B cell (primary cell): ENCODE measurements at regions of chr2 and their contacts with region 1.

Region 1: GRCh38 chr2:30146438-30147147 is at the start of gene YPEL5:
- DNase-seq: peak; percentile 100
- ATAC-seq: peak; percentile 81
- H3K4me3 ChIP-seq: peak within 1 kb of the TSS; percentile 87 to 98 (median 94)
- H3K4me3 Mint-ChIP-seq: peak within 1 kb of the TSS; percentile 90
- H3K27ac ChIP-seq: peak within 1 kb of the TSS; percentile 99
- H3K27ac Mint-ChIP-seq: peak within 1 kb of the TSS; percentile 100
- H3K4me1 ChIP-seq: peaks cover 38 to 46% of the 10 kb centered on the region in 2 donors
- H3K4me1 Mint-ChIP-seq: peaks cover 45% of the 10 kb centered on the region
- H3K27me3 ChIP-seq: no peaks in the 10 kb centered on the region
- H3K27me3 Mint-ChIP-seq: no peaks in the 10 kb centered on the region
- CTCF ChIP-seq: no peak
- total RNA-seq, gene YPEL5: 115 and 117 TPM in 2 replicates

Region 2: GRCh38 chr2:28870146-28870891 is 1276.3 kb before region 1 on chr2 and contains the start of gene TRMT61B:
- CTCF ChIA-PET with region 1: no interaction called
- POLR2A ChIA-PET with region 1: interaction called, 4 read pairs
- intact Hi-C with region 1: loop called (anchors 2 kb)
- DNase-seq: peak; percentile 98
- ATAC-seq: peak; percentile 96
- H3K4me3 ChIP-seq: peak within 1 kb of the TSS; percentile 71 to 92 (median 90)
- H3K4me3 Mint-ChIP-seq: peak within 1 kb of the TSS; percentile 99
- H3K27ac ChIP-seq: peak within 1 kb of the TSS; percentile 85 to 94
- H3K27ac Mint-ChIP-seq: peak within 1 kb of the TSS; percentile 100
- H3K4me1 ChIP-seq: peaks cover 20 to 23% of the 10 kb centered on the region in 2 donors
- H3K4me1 Mint-ChIP-seq: peaks cover 29% of the 10 kb centered on the region
- H3K27me3 ChIP-seq: peaks cover 0 to 6% (median 0%) of the 10 kb centered on the region in 4 experiments
- H3K27me3 Mint-ChIP-seq: peaks cover 2% of the 10 kb centered on the region
- CTCF ChIP-seq: no peak
- total RNA-seq, gene TRMT61B: 20.3 and 23.0 TPM in 2 replicates

Region 3: GRCh38 chr2:29733965-29734364 is 412.6 kb before region 1 on chr2:
- CTCF ChIA-PET with region 1: no interaction called
- POLR2A ChIA-PET with region 1: no interaction called
- intact Hi-C with region 1: no loop called
- DNase-seq: no peak
- ATAC-seq: no peak
- H3K4me3 ChIP-seq: no peak overlapping the region
- H3K4me3 Mint-ChIP-seq: no peak overlapping the region
- H3K27ac ChIP-seq: no peak overlapping the region
- H3K27ac Mint-ChIP-seq: no peak overlapping the region
- H3K4me1 ChIP-seq: no peaks in the 10 kb centered on the region
- H3K4me1 Mint-ChIP-seq: no peaks in the 10 kb centered on the region
- H3K27me3 ChIP-seq: no peaks in the 10 kb centered on the region
- H3K27me3 Mint-ChIP-seq: peaks cover 46% of the 10 kb centered on the region
- CTCF ChIP-seq: no peak

Region 4: DNA sequence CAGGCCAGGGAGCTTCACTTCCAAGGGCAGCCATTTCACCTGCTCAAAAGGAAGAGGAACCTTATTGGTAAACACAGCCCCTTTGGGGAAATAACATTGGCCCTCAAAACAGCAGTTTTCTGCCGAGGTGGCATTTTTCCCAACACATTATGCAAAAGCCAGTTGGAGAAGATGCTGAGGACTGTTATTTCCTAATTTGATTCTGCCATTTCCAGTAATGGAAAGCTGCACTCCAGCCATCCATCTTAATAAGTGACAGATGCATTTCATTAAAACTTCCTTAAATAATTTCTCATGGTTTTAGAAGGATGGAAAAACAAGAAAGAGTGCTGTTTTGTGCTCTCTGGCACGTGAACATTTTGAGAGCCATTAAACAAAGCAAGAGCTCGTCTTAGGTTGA is 169.3 kb before region 1 on chr2:
- CTCF ChIA-PET with region 1: no interaction called
- POLR2A ChIA-PET with region 1: no interaction called
- intact Hi-C with region 1: no loop called
- DNase-seq: no peak
- ATAC-seq: no peak
- H3K4me3 ChIP-seq: no peak overlapping the region
- H3K4me3 Mint-ChIP-seq: no peak overlapping the region
- H3K27ac ChIP-seq: no peak overlapping the region
- H3K27ac Mint-ChIP-seq: no peak overlapping the region
- H3K4me1 ChIP-seq: no peaks in the 10 kb centered on the region
- H3K4me1 Mint-ChIP-seq: no peaks in the 10 kb centered on the region
- H3K27me3 ChIP-seq: peaks cover 0 to 2% (median 0%) of the 10 kb centered on the region in 4 experiments
- H3K27me3 Mint-ChIP-seq: peaks cover 9% of the 10 kb centered on the region
- CTCF ChIP-seq: no peak

Region 5: GRCh38 chr2:30098266-30099005 is 48.2 kb before region 1 on chr2:
- CTCF ChIA-PET with region 1: interaction called, 3 read pairs
- POLR2A ChIA-PET with region 1: no interaction called
- intact Hi-C with region 1: loop called (anchors 5 kb)
- DNase-seq: no peak
- ATAC-seq: no peak
- H3K4me3 ChIP-seq: no peak overlapping the region
- H3K4me3 Mint-ChIP-seq: no peak overlapping the region
- H3K27ac ChIP-seq: no peak overlapping the region
- H3K27ac Mint-ChIP-seq: no peak overlapping the region
- H3K4me1 ChIP-seq: no peaks in the 10 kb centered on the region
- H3K4me1 Mint-ChIP-seq: no peaks in the 10 kb centered on the region
- H3K27me3 ChIP-seq: peaks cover 0 to 11% (median 2%) of the 10 kb centered on the region in 4 experiments
- H3K27me3 Mint-ChIP-seq: peaks cover 43% of the 10 kb centered on the region
- CTCF ChIP-seq: no peak

Region 6: DNA sequence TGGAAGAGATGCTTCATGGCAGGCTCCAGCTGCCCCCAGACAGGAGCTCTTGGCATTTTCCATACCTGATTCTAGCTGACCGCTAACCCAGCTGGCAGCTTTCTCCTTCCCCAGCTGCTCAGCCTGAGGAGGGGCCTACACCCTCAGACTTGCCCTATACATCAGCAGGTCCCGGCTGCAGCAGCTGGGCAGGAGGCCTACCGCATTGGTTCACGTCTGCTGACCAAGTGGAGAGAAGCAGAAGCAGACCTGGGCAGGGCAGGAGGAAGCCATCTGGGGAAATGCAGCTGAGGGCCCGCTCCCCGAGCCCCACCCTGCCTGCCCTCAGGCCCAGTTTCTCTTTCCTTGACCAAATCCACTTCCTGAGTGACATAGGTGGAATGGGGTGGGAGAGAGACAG is 135.5 kb after region 1 on chr2:
- CTCF ChIA-PET with region 1: no interaction called
- POLR2A ChIA-PET with region 1: interaction called, 5 read pairs
- intact Hi-C with region 1: loop called (anchors 1 kb)
- DNase-seq: peak; percentile 89
- ATAC-seq: peak; percentile 98
- H3K4me3 ChIP-seq: peak overlapping the region in 2 of 5 experiments; percentile 11 to 40
- H3K4me3 Mint-ChIP-seq: peak overlapping the region; percentile 66
- H3K27ac ChIP-seq: peak overlapping the region; percentile 75 to 88
- H3K27ac Mint-ChIP-seq: peak overlapping the region; percentile 92
- H3K4me1 ChIP-seq: peaks cover 89 to 94% of the 10 kb centered on the region in 2 donors
- H3K4me1 Mint-ChIP-seq: peaks cover 91% of the 10 kb centered on the region
- H3K27me3 ChIP-seq: no peaks in the 10 kb centered on the region
- H3K27me3 Mint-ChIP-seq: no peaks in the 10 kb centered on the region
- CTCF ChIP-seq: no peak

Region 7: GRCh38 chr2:31219131-31219969 is 1072.8 kb after region 1 on chr2:
- CTCF ChIA-PET with region 1: no interaction called
- POLR2A ChIA-PET with region 1: interaction called, 5 read pairs
- intact Hi-C with region 1: loop called (anchors 1 kb)
- DNase-seq: peak; percentile 87
- ATAC-seq: peak; percentile 77
- H3K4me3 ChIP-seq: peak overlapping the region in 4 of 5 experiments; percentile 2 to 33 (median 16)
- H3K4me3 Mint-ChIP-seq: peak overlapping the region; percentile 79
- H3K27ac ChIP-seq: peak overlapping the region; percentile 93 to 97
- H3K27ac Mint-ChIP-seq: peak overlapping the region; percentile 96
- H3K4me1 ChIP-seq: peaks cover 84 to 89% of the 10 kb centered on the region in 2 donors
- H3K4me1 Mint-ChIP-seq: peaks cover 93% of the 10 kb centered on the region
- H3K27me3 ChIP-seq: no peaks in the 10 kb centered on the region
- H3K27me3 Mint-ChIP-seq: no peaks in the 10 kb centered on the region
- CTCF ChIP-seq: no peak